Cardiac septum (tissue), 1 donor: ENCODE measurements at regions of chr5 and their contacts with region 1.

Region 1: DNA sequence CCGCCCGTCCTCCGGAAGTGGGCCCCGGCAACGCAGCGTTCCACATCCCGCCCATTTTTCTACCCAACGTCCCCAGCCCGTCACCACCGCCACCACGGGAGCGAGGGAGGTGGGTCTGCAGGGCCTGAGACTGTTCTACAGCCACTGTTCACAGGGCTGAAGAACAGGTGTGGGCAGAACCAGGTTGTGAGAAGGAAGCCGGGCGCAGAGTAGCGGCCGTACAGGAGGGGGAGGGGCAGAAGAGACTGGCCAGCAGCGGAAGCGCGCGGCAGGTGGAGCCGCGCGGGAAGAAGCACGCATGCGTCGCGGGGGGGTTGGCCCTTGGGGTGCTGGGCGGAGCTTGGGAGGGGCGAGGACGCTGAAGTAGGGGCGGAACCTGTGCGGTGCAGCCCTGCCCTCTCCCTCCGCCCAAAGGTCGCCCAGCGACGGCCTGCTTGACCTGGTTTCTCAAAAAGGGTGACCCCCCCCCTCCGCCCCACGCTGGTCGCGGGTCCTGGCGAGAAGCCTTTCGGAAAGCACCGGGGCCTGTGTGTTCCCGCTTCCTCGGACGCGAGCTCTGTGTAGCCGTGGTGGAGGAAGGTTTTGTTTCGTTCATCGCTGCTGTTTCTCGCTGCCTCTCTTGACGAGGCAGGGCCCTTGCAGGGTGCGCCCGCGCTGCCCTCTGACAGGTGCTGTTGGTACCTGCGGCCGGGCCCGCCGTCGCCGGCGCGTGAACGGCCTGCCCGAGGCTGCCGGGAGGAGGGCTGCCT is 7.8 kb upstream of the MGAT1 start:
- DNase-seq: peak; percentile 99

Region 2: GRCh38 chr5:180704368-180704869 is 106.0 kb before region 1 on chr5:
- intact Hi-C with region 1: no loop called
- DNase-seq: no peak

Region 3: DNA sequence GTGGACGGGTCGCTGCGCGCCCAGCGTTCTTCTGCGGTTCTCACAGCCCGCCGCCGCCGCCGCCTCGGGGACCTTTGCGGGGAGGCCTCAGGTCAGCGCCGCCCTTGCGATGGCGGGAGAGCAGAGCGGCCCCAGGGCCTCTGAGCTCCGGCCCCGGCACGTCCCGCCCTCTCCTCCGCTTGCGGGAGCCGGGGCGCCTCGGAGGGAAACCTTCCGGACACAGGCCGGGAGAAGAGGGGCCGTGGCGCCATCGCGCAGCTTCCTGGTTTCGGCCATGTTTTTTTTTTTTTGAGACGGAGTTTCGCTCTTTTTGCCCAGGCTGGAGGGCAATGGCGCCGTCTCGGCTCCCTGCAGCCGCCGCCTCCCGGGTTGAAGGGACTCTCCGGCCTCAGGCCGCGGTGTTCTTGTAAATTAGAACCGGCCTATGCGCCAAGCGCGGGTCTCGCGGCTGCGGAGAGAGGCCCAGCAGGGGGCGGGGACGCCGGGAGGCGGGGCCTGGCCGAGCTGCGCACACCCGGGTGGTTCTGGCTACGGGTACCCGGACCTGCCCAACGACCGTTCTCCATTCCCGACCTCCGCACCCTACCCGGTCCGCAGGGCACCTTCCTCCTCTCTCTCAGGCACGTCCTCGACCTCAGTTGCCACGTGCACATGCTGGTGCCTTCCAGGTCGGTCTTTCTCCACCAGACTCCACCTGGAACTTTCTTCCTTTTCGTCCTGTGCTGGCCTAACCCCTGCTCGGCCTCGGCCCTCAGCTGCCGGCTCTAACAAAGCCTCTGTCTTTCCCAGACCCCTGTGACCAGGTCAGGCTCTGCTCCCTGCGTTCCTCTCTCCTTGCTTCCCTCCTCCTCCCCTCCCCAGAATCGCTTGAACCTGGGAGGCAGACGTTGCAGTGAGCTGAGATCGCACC is 21.0 kb after region 1 on chr5:
- intact Hi-C with region 1: loop called (anchors 1 kb)
- DNase-seq: peak; percentile 97

Region 4: GRCh38 chr5:180860887-180861822 is 50.8 kb after region 1 on chr5 and contains the start of gene ZFP62:
- intact Hi-C with region 1: loop called (anchors 2 kb)
- DNase-seq: peak; percentile 95
- total RNA-seq, gene ZFP62: 19.4 TPM

Region 5: DNA sequence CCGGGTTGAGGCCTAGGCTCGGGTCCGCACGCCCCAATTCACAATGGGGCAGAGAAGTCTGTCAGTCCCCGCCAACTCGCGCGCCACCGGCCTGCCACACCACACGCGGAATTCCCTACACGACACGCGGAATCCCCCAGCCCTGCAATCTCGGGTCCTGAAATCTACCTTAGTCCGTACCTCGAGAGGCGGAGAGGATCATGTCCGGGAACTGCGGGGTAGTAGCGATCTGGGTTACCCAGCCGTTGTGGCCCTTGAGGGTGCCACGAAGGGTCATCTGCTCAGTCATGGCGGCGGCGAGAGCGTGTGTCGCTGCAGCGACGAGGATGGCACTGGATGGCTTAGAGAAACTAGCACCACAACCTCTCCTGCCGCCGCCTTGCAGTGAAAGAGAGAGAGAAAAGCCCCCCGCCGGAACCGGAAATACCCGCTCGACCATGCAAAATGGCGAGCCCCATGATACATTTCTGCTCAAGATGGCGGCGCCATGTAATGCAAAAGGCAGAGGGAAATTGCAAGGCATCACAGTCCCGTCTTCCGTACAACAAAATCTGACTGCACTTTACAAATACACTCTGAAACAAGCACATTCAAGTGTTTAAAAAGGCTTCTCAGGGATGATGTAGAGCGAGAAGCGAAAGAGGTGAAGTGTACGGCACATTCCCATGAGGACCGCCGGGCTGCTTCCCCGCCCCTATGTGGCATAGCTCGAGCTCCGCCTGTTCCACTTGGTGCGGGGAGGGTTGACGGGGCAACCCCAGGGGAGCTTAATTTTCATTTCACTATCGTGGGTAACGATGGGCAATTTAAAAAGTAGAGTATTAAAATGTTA is 433.3 kb after region 1 on chr5 and contains the start of gene RACK1:
- intact Hi-C with region 1: loop called (anchors 10 kb)
- DNase-seq: peak; percentile 92
- total RNA-seq, gene RACK1: 557 TPM